ENCODE measurements at regions of chr19 and their contacts with region 1.

Region 1: GRCh38 chr19:41356984-41357739 is 3.4 kb upstream of the TGFB1 start:
- DNase-seq: no peak
- H3K4me3 ChIP-seq: no peak overlapping the region
- H3K27ac ChIP-seq: no peak overlapping the region
- H3K4me1 ChIP-seq: peaks cover 5% of the 10 kb centered on the region
- H3K27me3 ChIP-seq: no peaks in the 10 kb centered on the region
- CTCF ChIP-seq: no peak
- POLR2A ChIP-seq: no peak

Region 2: DNA sequence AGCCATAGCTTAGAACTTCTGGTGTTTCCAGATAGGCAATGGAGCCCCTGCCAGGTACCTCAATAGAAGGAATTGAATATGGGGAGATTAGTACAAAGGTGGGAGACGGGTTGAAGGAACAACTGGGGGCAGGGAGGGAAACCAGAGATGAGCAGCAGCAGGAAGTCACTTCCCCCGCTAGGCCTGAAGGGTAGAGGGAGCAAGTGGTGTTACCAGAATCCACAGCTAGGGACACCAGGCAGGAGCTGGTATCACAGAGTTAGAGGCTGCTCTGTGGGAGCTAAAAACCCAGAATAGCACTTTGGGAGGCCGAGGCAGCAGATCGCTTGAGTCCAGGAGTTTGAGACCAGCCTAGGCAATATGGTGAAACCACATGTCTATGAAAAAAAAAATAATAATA is 108.3 kb before region 1 on chr19:
- intact Hi-C with region 1: no loop called
- DNase-seq: no peak
- H3K4me3 ChIP-seq: no peak overlapping the region
- H3K27ac ChIP-seq: no peak overlapping the region
- H3K4me1 ChIP-seq: no peaks in the 10 kb centered on the region
- H3K27me3 ChIP-seq: no peaks in the 10 kb centered on the region
- CTCF ChIP-seq: no peak
- POLR2A ChIP-seq: no peak

Region 3: DNA sequence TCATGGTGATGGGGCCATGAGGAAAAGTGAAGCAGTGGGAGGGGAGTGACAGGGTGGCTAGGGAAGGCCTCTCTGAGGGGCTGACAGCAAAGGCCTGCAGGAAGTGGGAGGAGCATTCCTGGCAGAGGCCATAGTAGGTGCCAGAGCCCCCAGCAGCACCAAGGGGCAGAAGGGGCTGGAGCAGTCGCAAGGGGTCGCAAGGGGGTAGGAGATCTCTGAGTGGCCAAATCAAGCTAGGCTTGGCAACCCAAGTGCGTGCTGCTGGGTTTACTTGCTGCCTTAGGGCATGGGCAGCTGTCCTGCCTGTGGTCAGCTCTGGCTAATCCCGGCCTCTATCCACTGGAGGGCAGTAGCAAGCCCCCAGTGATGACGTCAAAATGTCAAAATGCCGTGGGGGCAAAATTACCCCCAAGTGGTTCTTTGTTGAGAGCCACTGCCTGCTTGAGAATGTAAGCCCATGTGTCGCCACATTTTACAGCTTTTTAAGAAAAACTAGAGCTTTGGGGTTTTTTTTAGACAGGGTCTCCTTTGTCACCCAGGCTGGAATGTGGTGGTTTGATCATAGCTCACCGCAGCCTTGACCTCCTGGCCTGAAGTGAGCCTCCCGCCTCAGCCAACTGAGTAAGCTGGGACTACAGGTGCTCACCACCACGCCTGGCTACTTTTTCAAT is 35.4 kb before region 1 on chr19:
- intact Hi-C with region 1: loop called (anchors 5 kb)
- DNase-seq: no peak
- H3K4me3 ChIP-seq: no peak overlapping the region
- H3K27ac ChIP-seq: peak overlapping the region; percentile 46 to 73
- H3K4me1 ChIP-seq: peaks cover 13% of the 10 kb centered on the region
- H3K27me3 ChIP-seq: no peaks in the 10 kb centered on the region
- CTCF ChIP-seq: peak in 3 of 4 experiments; percentile 15 to 64 (median 37)
- POLR2A ChIP-seq: no peak